MCF 10A (cell line): ENCODE measurements at regions of chr1 and their contacts with region 1.

Region 1: GRCh38 chr1:202192770-202193613 is 607 bp upstream of the LGR6 start:
- DNase-seq: peak; percentile 72
- H3K4me3 Mint-ChIP-seq: no peak overlapping the region
- H3K27ac Mint-ChIP-seq: no peak overlapping the region
- H3K4me1 Mint-ChIP-seq: peaks cover under 1% of the 10 kb centered on the region
- H3K27me3 Mint-ChIP-seq: peaks cover 38% of the 10 kb centered on the region
- CTCF ChIP-seq: peak; percentile 99

Region 2: DNA sequence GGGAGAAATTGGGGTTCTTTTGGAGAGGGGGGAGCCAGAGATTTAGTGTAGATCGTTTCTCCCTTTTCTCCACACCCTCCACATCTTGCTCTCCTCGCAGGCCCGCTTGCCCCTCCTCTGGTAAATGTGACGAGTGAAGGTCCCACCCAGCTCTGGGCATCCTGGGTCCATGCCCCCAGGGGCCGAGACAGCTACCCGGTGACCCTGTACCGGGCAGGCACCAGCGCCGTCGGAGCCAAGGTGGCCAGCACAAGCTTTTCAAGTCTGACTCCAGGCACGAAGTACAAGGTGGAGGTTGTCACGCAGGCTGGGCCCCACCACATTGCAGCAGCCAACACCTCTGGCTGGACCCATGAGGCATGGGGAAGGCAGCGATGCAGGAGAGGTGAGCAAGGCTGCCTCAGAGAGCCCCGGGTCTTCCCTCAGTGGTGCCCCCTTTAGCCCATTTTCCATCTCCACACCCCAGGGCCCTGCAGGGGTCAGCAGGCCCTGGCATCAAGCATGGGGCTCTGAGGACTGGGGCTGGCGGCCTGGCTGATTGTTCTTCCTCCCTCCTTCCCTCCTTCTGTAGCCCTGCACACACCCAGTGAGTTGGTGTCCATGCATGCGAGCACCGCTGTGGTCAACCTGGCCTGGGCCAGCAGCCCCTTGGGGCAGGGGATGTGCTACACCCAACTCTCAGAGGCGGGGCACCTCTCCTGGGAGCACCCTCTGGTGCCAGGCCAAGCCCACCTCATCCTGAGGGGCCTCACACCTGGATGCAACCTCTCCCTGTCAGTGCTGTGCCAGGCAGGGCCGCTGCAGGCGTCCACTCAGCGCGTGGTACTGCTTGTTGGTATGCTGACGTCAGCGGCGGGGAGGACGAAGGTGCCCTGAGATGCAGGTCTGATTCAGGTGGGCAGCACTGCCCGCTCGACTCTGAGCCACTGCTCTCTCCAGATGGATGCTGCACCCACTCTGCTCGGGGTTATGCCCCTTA is 15.8 kb before region 1 on chr1:
- CTCF ChIA-PET with region 1: interaction called, 49 read pairs
- POLR2A ChIA-PET with region 1: no interaction called
- intact Hi-C with region 1: no loop called
- DNase-seq: no peak
- H3K4me3 Mint-ChIP-seq: no peak overlapping the region
- H3K27ac Mint-ChIP-seq: no peak overlapping the region
- H3K4me1 Mint-ChIP-seq: no peaks in the 10 kb centered on the region
- H3K27me3 Mint-ChIP-seq: peaks cover 24% of the 10 kb centered on the region
- CTCF ChIP-seq: peak; percentile 12

Region 3: GRCh38 chr1:202221911-202222909 is 29.2 kb after region 1 on chr1:
- CTCF ChIA-PET with region 1: interaction called, 20 read pairs
- POLR2A ChIA-PET with region 1: interaction called, 5 read pairs
- intact Hi-C with region 1: no loop called
- DNase-seq: peak; percentile 90
- H3K4me3 Mint-ChIP-seq: no peak overlapping the region
- H3K27ac Mint-ChIP-seq: no peak overlapping the region
- H3K4me1 Mint-ChIP-seq: peaks cover 21% of the 10 kb centered on the region
- H3K27me3 Mint-ChIP-seq: peaks cover 23% of the 10 kb centered on the region
- CTCF ChIP-seq: no peak

Region 4: DNA sequence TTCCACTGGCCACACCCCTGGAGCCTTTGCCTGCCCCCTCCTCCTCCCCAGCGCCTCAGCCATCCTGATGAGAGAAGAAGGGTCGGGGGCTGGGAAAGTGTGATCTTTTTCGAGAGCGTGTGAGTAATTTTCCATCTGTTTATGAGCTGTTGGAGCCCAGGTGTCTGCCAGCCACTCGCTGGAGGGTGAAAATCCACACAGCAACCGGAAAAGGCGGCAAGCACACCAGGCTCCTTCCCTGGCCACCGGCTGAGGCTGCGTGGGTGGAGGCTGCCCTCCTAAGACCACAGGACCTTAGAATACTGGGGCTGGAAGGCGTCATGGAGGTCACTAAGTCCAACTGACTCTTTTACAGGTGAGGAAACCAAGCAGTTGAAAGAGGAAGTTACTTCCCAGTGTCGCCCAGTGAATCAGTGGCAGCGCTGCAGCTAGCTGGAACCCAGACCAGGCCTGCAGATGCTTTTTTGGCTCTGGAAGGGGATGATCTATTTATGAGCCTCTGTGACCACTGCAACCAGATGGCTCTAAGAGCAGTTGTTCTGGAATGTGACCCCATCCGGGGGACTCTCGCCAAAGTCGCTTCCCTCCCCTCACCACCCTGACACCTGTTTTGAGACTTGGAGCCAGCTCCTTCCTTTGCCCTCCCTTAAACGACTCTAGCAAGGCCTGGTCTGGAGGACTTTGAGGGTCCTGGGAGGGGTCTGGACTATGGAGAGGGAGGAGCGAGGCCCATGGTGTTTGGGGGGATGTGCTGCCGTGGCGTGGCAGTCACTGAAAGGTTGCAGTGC is 55.1 kb after region 1 on chr1:
- CTCF ChIA-PET with region 1: interaction called, 11 read pairs
- POLR2A ChIA-PET with region 1: no interaction called
- intact Hi-C with region 1: no loop called
- DNase-seq: no peak
- H3K4me3 Mint-ChIP-seq: no peak overlapping the region
- H3K27ac Mint-ChIP-seq: no peak overlapping the region
- H3K4me1 Mint-ChIP-seq: peaks cover 12% of the 10 kb centered on the region
- H3K27me3 Mint-ChIP-seq: peaks cover 27% of the 10 kb centered on the region
- CTCF ChIP-seq: no peak

Region 5: GRCh38 chr1:202291961-202292712 is 99.1 kb after region 1 on chr1:
- CTCF ChIA-PET with region 1: interaction called, 35 read pairs
- POLR2A ChIA-PET with region 1: interaction called, 7 read pairs
- intact Hi-C with region 1: no loop called
- DNase-seq: peak; percentile 100
- H3K4me3 Mint-ChIP-seq: no peak overlapping the region
- H3K27ac Mint-ChIP-seq: no peak overlapping the region
- H3K4me1 Mint-ChIP-seq: peaks cover 49% of the 10 kb centered on the region
- H3K27me3 Mint-ChIP-seq: peaks cover 15% of the 10 kb centered on the region
- CTCF ChIP-seq: no peak

Region 6: DNA sequence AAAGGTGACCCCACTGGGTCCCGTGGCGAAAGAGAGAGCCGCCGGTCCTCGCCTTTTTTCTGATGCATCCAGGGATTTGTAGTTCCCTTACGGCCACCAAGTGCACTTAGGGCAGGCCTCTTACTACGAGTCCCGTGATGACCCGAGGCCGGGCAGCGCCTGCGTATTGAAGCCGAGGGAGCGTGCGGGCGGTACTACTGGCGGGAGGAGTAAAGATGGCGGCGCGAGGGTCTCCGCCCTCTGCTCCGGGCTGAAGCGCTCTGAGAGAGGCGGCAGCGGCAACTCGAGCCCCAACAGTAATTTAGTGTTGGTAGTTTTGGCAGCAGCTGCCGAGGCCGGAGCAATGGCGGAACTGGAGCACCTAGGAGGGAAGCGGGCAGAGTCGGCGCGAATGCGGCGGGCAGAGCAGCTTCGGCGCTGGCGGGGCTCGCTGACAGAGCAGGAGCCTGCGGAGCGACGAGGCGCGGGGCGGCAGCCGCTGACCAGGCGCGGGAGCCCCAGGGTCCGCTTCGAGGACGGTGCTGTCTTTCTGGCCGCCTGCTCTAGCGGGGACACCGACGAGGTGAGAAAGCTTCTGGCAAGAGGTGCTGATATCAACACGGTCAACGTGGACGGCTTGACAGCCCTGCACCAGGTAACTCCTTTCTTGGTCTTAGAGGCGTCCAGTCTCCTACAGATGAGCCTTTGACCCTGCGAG is 155.7 kb after region 1 on chr1 and contains the start of gene PPP1R12B:
- CTCF ChIA-PET with region 1: interaction called, 15 read pairs
- POLR2A ChIA-PET with region 1: no interaction called
- intact Hi-C with region 1: no loop called
- DNase-seq: peak; percentile 100
- H3K4me3 Mint-ChIP-seq: peak within 1 kb of the TSS; percentile 81
- H3K27ac Mint-ChIP-seq: peak within 1 kb of the TSS; percentile 78
- H3K4me1 Mint-ChIP-seq: peaks cover 33% of the 10 kb centered on the region
- H3K27me3 Mint-ChIP-seq: no peaks in the 10 kb centered on the region
- CTCF ChIP-seq: no peak
- total RNA-seq, gene PPP1R12B: 31.1 and 33.8 TPM in 2 replicates